ENCODE measurements at regions of chr5 and their contacts with region 1.

Region 1: GRCh38 chr5:177390363-177391300 is 6.4 kb downstream of the SLC34A1 start:
- DNase-seq: peak; percentile 93
- H3K4me3 Mint-ChIP-seq: peak overlapping the region; percentile 8
- H3K27ac Mint-ChIP-seq: peak overlapping the region; percentile 92
- H3K4me1 Mint-ChIP-seq: peaks cover 42% of the 10 kb centered on the region
- H3K27me3 Mint-ChIP-seq: peaks cover 56% of the 10 kb centered on the region

Region 2: DNA sequence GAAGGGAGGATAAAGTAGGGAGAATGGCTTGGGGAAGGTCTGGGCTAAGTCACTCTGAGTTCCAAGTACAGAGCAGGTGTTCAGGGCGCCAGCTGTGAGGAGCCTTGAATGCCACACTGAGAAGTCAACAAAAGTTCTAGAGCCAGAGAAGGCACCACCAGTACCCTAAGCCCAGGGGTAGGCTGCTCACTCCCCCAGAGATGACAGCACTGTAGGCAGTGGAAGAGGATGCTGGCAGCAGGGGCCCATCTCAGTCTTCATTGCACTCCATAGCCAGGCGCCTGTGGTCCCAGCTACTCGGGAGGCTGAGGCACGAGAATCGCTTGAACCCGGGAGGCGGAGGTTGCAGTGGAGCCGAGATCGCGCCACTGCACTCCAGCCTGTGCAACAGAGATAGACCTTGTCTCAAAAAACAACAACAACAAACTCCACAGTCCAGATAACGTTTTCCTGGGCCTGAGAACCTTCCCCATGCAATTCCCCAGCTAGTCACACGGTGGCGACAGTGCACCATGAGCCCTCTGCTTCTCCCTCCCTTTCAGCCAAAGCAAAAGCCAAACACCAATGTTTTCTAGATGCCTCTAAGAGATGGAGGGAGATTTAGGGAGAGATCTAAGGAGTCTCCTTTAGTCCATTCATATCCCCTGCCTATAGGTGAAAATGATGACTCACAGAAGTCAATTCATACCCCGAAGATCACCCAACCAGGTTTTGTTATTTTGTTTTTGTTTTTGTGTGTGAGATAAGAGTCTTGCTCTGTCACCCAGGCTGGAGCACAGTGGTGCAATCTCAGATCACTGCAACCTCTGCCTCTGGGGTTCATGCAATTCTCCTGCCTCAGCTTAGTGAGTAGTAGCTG is 276.8 kb before region 1 on chr5:
- CTCF ChIA-PET with region 1: interaction called, 26 read pairs
- DNase-seq: peak; percentile 88
- H3K4me3 Mint-ChIP-seq: no peak overlapping the region
- H3K27ac Mint-ChIP-seq: no peak overlapping the region
- H3K4me1 Mint-ChIP-seq: peaks cover 27% of the 10 kb centered on the region
- H3K27me3 Mint-ChIP-seq: peaks cover 10% of the 10 kb centered on the region

Region 3: DNA sequence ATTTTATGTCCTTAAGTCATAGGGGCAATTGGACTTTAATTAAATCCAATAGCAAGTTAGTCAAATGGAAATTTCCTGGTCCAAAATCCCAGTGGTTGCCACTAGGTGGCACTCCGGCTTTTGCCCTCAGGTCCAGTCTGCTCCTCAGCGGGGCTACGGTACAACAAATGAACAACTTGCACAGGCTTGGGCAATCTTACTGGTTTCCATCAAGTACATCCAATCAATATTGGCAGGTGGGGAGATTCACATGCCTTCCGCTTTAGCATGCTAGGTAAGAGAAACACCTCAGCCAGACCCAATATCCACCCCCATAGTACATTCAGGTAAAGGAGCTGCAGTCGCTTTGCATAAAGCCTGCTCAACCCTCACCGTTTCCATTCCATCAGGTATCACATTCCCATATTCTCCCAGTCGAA is 72.7 kb before region 1 on chr5:
- CTCF ChIA-PET with region 1: interaction called, 22 read pairs
- DNase-seq: peak; percentile 85
- H3K4me3 Mint-ChIP-seq: no peak overlapping the region
- H3K27ac Mint-ChIP-seq: no peak overlapping the region
- H3K4me1 Mint-ChIP-seq: peaks cover 44% of the 10 kb centered on the region
- H3K27me3 Mint-ChIP-seq: no peaks in the 10 kb centered on the region

Region 4: DNA sequence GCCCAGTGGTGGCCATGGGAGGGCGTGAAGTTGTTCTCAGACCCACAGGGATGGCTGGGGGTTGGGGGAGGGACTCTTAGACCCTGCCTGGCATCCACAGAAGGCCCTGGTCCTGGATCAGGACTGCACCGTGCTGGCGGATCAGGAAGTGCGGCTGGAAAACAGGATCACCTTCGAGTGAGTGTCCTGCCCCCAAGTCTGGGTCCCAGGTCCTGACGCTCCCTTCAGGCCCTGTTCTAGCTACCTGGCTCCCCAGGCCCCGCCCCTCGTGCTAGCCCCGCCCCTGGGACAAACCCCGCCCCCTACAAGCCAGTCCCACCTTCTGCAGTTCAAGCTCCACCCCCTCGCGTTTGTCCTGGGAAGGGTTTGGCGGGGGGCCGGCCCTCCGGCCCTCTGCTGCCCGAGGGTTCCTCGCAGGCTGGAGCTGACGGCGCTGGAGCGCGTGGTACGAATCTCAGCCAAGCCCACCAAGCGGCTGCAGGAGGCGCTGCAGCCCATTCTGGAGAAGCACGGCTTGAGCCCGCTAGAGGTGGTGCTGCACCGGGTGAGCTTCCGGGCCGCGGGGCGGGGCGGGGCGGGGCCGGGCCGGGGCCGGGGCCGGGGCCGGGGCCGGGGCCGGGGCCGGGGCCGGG is 20.0 kb before region 1 on chr5:
- CTCF ChIA-PET with region 1: interaction called, 112 read pairs
- DNase-seq: peak; percentile 82
- H3K4me3 Mint-ChIP-seq: peak overlapping the region; percentile 62
- H3K27ac Mint-ChIP-seq: peak overlapping the region; percentile 33
- H3K4me1 Mint-ChIP-seq: peaks cover 77% of the 10 kb centered on the region
- H3K27me3 Mint-ChIP-seq: no peaks in the 10 kb centered on the region

Region 5: GRCh38 chr5:177446200-177447065 is 55.8 kb after region 1 on chr5 and contains the start of gene PRR7:
- CTCF ChIA-PET with region 1: interaction called, 119 read pairs
- DNase-seq: peak; percentile 77
- H3K4me3 Mint-ChIP-seq: peak within 1 kb of the TSS; percentile 64
- H3K27ac Mint-ChIP-seq: peak within 1 kb of the TSS; percentile 88
- H3K4me1 Mint-ChIP-seq: peaks cover 55% of the 10 kb centered on the region
- H3K27me3 Mint-ChIP-seq: peaks cover 41% of the 10 kb centered on the region

Region 6: GRCh38 chr5:177462021-177462670 is 71.5 kb after region 1 on chr5:
- CTCF ChIA-PET with region 1: interaction called, 28 read pairs
- DNase-seq: no peak
- H3K4me3 Mint-ChIP-seq: no peak overlapping the region
- H3K27ac Mint-ChIP-seq: peak overlapping the region; percentile 4
- H3K4me1 Mint-ChIP-seq: peaks cover 21% of the 10 kb centered on the region
- H3K27me3 Mint-ChIP-seq: peaks cover 14% of the 10 kb centered on the region

Region 7: DNA sequence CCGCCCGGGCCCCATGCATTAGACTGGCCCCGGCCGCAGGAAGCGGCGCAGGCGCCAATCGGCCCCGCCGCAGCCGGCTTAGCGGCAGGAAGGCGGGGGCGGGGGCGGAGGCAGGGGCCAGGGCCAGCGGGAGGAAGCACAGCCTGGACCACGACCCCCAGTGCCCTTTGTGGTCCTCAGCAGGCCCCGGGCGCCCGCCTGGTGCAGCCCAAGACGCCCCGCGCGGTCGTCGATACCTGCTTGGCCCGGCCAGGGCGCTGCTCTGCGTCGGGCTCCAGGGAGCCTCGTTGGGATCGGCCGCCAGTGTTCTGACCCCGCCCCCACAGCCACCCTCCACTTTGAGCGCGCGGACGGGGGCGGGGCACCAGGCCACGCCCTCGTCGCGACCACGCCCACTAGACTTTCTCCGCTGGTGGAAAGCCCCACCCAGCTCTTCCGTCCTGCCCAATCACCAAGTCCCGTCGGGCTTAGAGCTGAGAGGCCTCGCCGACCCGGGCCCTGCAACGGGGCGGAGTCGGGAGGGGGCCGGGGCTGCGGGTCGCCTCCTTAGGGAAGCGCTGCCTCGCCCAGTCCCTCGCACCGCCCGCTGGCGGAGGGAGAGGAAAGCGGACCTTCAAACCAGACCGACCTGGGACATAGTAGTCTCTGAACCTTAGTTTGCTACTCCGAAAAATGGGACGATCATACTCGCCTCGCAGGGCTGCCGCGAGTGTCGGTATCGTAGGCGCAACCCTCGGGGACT is 106.8 kb after region 1 on chr5 and contains the start of gene PDLIM7:
- CTCF ChIA-PET with region 1: interaction called, 114 read pairs
- DNase-seq: peak; percentile 95
- H3K4me3 Mint-ChIP-seq: peak within 1 kb of the TSS; percentile 81
- H3K27ac Mint-ChIP-seq: no peak within 1 kb of the TSS
- H3K4me1 Mint-ChIP-seq: peaks cover 36% of the 10 kb centered on the region
- H3K27me3 Mint-ChIP-seq: peaks cover 32% of the 10 kb centered on the region

Region 8: GRCh38 chr5:177620560-177620959 is 229.9 kb after region 1 on chr5:
- CTCF ChIA-PET with region 1: no interaction called
- DNase-seq: no peak
- H3K4me3 Mint-ChIP-seq: no peak overlapping the region
- H3K27ac Mint-ChIP-seq: no peak overlapping the region
- H3K4me1 Mint-ChIP-seq: no peaks in the 10 kb centered on the region
- H3K27me3 Mint-ChIP-seq: no peaks in the 10 kb centered on the region